Endothelial cell of umbilical vein (primary cell): ENCODE measurements at regions of chr3 and their contacts with region 1.

Region 1: DNA sequence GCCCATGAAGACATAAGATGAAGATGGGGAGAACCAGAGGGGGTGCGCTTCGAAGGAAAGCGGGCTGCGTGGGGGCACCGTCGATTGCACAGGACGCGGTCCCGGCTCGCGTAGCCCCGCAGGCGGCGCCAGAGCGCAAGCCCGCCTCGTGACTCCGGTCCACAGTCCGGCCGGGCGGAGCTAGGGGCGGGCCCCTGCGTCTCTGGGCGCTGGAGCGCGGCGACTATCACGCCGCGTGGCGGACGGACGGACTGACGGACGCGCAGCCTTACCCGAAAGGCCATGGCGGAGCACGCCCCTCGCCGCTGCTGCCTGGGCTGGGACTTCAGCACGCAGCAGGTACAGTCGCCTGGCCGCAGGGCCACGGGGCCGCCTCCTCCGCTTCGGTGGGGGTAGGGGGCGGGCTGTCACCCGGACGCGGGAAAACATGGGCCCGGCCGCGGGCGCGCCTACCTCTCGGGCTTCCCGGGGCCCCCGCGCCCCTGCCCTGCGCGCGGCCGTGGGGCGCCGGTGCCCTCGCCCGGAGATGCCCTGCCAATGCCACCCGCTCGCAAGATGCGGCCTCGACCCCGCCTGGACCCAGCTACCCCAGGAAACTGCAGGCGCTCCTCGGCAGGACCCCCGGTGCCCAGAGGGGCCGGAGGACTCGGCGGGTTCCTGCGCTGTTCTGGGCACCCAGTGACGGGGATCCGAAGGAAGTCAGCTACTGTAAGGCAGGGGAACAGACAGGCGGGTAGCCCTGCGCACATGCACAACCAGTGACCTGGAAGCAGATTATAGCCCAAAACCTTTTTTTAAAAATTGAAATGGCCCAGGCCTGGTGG is at the start of gene XYLB:
- DNase-seq: peak; percentile 81
- H3K4me3 ChIP-seq: peak within 1 kb of the TSS; percentile 53 to 96 (median 58)
- H3K27ac ChIP-seq: no peak within 1 kb of the TSS
- H3K4me1 ChIP-seq: no peaks in the 10 kb centered on the region
- H3K27me3 ChIP-seq: no peaks in the 10 kb centered on the region
- CTCF ChIP-seq: peak; percentile 81 to 95
- POLR2A ChIP-seq: peak; percentile 28
- total RNA-seq, gene XYLB: 4.3 and 6.1 TPM in 2 replicates

Region 2: GRCh38 chr3:38164966-38165680 is 181.7 kb before region 1 on chr3 and contains the start of gene OXSR1:
- CTCF ChIA-PET with region 1: interaction called, 17 read pairs
- POLR2A ChIA-PET with region 1: no interaction called
- dilution Hi-C with region 1: no loop called
- intact Hi-C with region 1: loop called (anchors 1 kb)
- DNase-seq: peak; percentile 100
- H3K4me3 ChIP-seq: peak within 1 kb of the TSS; percentile 62 to 88 (median 86)
- H3K27ac ChIP-seq: peak within 1 kb of the TSS; percentile 81
- H3K4me1 ChIP-seq: peaks cover 4% of the 10 kb centered on the region
- H3K27me3 ChIP-seq: no peaks in the 10 kb centered on the region
- CTCF ChIP-seq: no peak
- POLR2A ChIP-seq: peak; percentile 85
- total RNA-seq, gene OXSR1: 32.9 and 34.3 TPM in 2 replicates

Region 3: DNA sequence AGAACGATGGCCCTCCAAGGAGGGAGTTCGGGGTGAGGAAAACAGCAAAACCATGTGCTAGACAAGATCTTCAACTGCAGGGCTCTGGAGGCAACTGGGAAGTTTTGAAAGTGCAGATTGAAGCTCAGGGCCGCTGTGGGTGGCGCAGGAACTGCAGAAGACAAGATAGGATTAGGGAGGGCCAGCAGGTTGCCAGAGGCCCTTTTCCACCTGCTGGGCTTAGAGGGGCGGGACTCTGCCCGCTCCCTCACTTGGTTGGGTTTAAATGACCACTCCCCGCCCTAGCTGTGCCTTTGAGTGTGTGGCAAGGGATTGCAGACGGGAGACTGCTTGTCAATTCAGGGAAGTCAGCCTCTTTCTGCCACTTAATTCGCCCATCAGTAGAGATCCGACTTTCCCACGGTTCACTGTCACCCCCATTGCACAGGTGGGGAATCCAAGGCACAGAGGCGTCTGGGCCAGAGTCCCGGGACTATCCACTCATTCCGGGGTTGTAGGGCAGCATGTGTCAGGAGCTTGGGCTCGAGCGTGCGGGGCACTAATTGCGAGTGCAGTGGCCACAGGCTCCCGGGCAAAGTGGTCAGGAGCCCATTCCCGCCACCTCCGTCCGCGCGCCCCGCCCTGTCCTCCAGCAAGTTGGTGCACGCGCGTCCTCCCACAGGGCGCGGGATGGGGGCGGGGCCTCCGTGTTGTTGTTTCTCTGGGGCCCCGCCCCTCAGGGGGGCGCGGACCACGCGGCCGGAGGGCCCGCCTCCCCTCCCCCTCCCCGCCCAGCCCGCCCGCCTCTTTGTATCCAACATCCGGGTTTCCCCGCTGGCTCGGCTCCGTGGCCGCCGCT is 106.5 kb after region 1 on chr3 and contains the start of gene ACVR2B:
- CTCF ChIA-PET with region 1: interaction called, 16 read pairs
- POLR2A ChIA-PET with region 1: no interaction called
- dilution Hi-C with region 1: no loop called
- intact Hi-C with region 1: loop called (anchors 1 kb)
- DNase-seq: peak; percentile 69
- H3K4me3 ChIP-seq: peak within 1 kb of the TSS; percentile 37 to 85 (median 68)
- H3K27ac ChIP-seq: peak within 1 kb of the TSS; percentile 45
- H3K4me1 ChIP-seq: no peaks in the 10 kb centered on the region
- H3K27me3 ChIP-seq: no peaks in the 10 kb centered on the region
- CTCF ChIP-seq: no peak
- POLR2A ChIP-seq: no peak
- total RNA-seq, gene ACVR2B: 4.9 and 5.6 TPM in 2 replicates

Region 4: DNA sequence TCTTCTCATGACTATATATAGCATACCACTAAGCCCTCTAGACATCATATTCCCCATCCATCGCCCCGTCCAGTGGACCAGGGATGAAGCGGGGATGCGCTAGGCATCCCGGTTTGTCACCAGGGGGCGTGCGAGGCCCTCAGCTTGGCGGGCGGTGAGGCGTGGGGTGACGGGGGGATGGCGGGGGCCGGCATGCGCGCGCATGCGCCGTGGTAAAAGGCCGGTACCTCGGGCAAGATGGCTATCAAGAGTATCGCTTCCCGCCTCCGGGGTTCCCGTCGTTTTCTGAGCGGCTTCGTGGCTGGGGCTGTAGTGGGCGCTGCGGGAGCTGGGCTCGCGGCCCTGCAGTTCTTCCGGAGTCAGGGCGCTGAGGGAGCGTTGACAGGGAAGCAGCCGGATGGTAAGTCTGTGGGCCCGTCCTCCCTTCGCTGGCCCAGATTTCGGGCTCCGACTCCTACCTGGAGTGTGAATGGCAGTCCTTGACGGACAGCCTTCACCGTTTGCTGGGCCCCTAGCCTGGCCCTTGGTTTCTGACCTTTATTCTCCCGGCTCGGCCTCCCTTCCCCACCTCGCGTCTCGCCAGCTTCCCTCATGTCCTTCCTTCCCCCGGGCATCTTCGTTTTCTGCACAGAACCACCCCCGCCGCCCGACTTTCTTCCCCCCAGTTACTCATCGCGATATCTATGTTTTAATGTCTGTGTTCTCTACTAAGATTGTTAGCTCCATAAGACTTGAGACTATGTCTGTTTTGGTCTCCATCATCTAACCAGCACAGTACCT is 149.5 kb after region 1 on chr3 and contains the start of gene EXOG:
- CTCF ChIA-PET with region 1: interaction called, 10 read pairs
- POLR2A ChIA-PET with region 1: no interaction called
- dilution Hi-C with region 1: no loop called
- intact Hi-C with region 1: loop called (anchors 5 kb)
- DNase-seq: peak; percentile 93
- H3K4me3 ChIP-seq: peak within 1 kb of the TSS; percentile 73 to 84 (median 80)
- H3K27ac ChIP-seq: peak within 1 kb of the TSS; percentile 4
- H3K4me1 ChIP-seq: peaks cover 7% of the 10 kb centered on the region
- H3K27me3 ChIP-seq: no peaks in the 10 kb centered on the region
- CTCF ChIP-seq: peak; percentile 84 to 94
- POLR2A ChIP-seq: peak; percentile 77
- total RNA-seq, gene EXOG: 21.8 and 21.9 TPM in 2 replicates

Region 5: GRCh38 chr3:38662544-38662943 is 315.7 kb after region 1 on chr3:
- CTCF ChIA-PET with region 1: interaction called, 12 read pairs
- POLR2A ChIA-PET with region 1: no interaction called
- dilution Hi-C with region 1: no loop called
- intact Hi-C with region 1: loop called (anchors 10 kb)
- DNase-seq: peak; percentile 58
- H3K4me3 ChIP-seq: no peak overlapping the region
- H3K27ac ChIP-seq: no peak overlapping the region
- H3K4me1 ChIP-seq: no peaks in the 10 kb centered on the region
- H3K27me3 ChIP-seq: peaks cover 16 to 19% of the 10 kb centered on the region in 2 experiments
- CTCF ChIP-seq: peak; percentile 41 to 52
- POLR2A ChIP-seq: no peak